ENCODE measurements at regions of chr12 and their contacts with region 1.

Region 1: DNA sequence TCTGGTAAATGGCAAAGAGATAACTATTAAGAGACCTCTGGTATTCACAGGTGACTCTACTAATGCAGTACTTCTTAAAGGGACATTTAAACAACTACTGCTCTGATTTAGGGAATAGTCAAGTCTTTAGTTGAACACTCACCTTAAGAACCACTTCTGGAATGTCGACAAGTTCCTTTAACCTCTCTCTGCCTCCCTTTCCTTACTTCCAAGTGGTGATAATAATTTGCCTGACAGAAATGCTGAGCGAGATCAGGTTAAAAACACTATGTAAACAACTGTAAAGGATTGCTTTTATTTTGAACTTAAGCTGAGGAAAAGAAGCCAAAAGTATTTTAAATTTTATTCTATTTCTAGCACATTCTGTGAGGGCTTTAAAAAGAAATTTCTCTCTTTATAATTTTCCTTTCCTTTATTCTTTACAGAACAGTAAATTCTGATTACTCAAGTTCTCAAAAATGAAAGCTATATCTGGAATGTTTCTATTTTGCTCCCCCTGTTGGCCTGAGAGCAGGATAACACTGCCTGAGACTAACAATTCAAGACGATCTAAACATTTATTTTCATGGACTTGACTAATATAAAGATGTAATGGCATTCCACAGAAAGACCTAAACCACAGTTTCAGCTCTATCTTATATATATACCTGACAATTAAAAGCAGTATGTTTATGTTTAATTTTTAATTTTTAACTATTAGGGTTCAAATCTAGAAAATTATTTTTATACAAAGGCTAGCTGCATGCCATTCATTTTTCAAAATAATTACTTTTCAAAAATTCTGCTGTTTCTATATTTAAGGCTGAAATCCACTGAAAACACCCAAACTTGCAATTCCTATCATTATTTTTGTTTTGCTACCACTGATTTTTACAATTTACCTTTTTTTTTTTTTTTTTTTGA is 29.2 kb downstream of the ZCCHC8 start:
- DNase-seq: no peak
- H3K4me3 ChIP-seq: peak overlapping the region in 1 of 4 donors; percentile 24
- H3K27ac ChIP-seq: peak overlapping the region; percentile 75 to 79 (median 78)
- H3K4me1 ChIP-seq: peaks cover 6 to 16% (median 14%) of the 10 kb centered on the region in 4 donors
- H3K27me3 ChIP-seq: no peaks in the 10 kb centered on the region
- CTCF ChIP-seq: peak; percentile 81 to 91 (median 82)
- EP300 ChIP-seq: no peak
- POLR2A ChIP-seq: no peak

Region 2: GRCh38 chr12:122349078-122349477 is 122.5 kb before region 1 on chr12:
- intact Hi-C with region 1: loop called (anchors 5 kb)
- DNase-seq: no peak
- H3K4me3 ChIP-seq: no peak overlapping the region
- H3K27ac ChIP-seq: peak overlapping the region in 2 of 4 donors; percentile 8 to 70
- H3K4me1 ChIP-seq: peaks cover 0 to 20% (median 18%) of the 10 kb centered on the region in 4 donors
- H3K27me3 ChIP-seq: no peaks in the 10 kb centered on the region
- CTCF ChIP-seq: no peak
- EP300 ChIP-seq: no peak
- POLR2A ChIP-seq: no peak

Region 3: DNA sequence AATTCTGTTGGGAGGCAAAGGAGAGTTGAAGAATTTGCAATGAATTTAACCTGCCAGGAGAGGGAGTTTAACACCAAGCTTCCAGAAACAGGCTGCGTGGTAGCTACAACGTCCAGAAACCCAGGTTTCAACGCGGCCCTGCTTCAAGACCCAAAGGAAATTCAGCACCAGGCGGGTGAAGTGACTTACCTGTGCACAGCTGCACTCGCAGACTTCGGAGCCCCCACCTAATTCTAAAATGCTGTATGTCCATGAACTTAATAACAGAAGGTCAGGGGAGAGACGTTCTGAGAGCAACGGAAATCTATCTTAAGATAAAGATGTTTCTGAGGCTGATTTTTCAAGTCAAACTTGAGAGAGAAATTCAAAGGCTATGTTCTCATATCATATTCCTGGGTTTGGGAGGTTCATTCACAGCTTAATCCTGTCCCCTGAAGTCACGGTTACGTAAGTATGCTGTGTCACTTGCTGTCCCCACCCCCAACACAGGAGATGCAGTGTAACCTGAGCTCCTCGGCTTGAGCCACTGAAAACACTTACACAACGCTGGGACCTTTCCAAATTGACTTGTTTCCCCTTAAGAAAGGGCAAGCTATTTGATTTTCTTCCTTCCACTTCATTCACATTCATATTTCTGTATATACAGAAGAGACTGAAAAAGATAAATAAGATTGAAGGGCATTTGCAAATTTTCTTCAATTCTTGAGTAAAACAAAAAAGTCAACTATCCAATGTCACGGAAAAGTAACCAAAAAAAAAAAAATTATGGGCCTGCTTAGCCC is 71.8 kb before region 1 on chr12:
- intact Hi-C with region 1: loop called (anchors 2 kb)
- DNase-seq: no peak
- H3K4me3 ChIP-seq: peak overlapping the region; percentile 21 to 26 (median 21)
- H3K27ac ChIP-seq: peak overlapping the region; percentile 87 to 95 (median 90)
- H3K4me1 ChIP-seq: peaks cover 16 to 85% (median 76%) of the 10 kb centered on the region in 4 donors
- H3K27me3 ChIP-seq: no peaks in the 10 kb centered on the region
- CTCF ChIP-seq: peak; percentile 70 to 83 (median 71)
- EP300 ChIP-seq: no peak
- POLR2A ChIP-seq: no peak

Region 4: GRCh38 chr12:122437656-122438121 is 33.9 kb before region 1 on chr12:
- intact Hi-C with region 1: no loop called
- DNase-seq: peak; percentile 92
- H3K4me3 ChIP-seq: peak overlapping the region in 2 of 4 donors; percentile 10 to 18
- H3K27ac ChIP-seq: peak overlapping the region; percentile 63 to 73 (median 70)
- H3K4me1 ChIP-seq: peaks cover 0 to 14% (median 12%) of the 10 kb centered on the region in 4 donors
- H3K27me3 ChIP-seq: no peaks in the 10 kb centered on the region
- CTCF ChIP-seq: no peak
- EP300 ChIP-seq: no peak
- POLR2A ChIP-seq: no peak

Region 5: DNA sequence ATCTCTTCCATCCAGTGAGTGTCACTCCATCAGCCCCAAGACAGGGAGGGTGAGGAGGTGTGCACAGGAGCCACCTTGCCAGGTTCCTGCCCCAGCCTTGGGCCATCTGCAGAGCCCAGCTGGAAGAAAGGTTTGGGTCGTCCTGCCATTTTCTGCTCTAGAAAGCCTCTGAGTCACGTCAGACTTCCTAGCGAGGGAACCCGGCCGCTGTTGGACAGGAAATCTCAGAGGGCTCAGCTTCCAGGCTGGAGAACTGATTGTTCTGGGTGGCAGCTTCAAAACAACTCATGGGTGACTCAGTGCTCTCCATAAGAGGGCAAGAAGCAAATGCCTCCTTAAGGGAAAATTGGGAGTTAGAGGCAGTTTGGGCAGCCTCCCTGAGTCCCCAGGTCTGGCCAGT is 380.2 kb after region 1 on chr12:
- intact Hi-C with region 1: no loop called
- DNase-seq: no peak
- H3K4me3 ChIP-seq: no peak overlapping the region
- H3K27ac ChIP-seq: peak overlapping the region; percentile 52 to 76 (median 54)
- H3K4me1 ChIP-seq: peaks cover 25 to 32% (median 31%) of the 10 kb centered on the region in 4 donors
- H3K27me3 ChIP-seq: no peaks in the 10 kb centered on the region
- CTCF ChIP-seq: no peak
- EP300 ChIP-seq: no peak
- POLR2A ChIP-seq: no peak

Measured in esophagus muscularis mucosa (tissue), 4 donors.